ENCODE measurements at regions of chr11 and their contacts with region 1.

Region 1: GRCh38 chr11:1694064-1694845 is 2.7 kb upstream of the KRTAP5-6 start:
- DNase-seq: peak; percentile 92
- CTCF ChIP-seq: peak; percentile 93

Region 2: GRCh38 chr11:1335811-1336761 is 358.2 kb before region 1 on chr11:
- CTCF ChIA-PET with region 1: no interaction called
- POLR2A ChIA-PET with region 1: no interaction called
- DNase-seq: peak; percentile 57
- CTCF ChIP-seq: no peak

Region 3: DNA sequence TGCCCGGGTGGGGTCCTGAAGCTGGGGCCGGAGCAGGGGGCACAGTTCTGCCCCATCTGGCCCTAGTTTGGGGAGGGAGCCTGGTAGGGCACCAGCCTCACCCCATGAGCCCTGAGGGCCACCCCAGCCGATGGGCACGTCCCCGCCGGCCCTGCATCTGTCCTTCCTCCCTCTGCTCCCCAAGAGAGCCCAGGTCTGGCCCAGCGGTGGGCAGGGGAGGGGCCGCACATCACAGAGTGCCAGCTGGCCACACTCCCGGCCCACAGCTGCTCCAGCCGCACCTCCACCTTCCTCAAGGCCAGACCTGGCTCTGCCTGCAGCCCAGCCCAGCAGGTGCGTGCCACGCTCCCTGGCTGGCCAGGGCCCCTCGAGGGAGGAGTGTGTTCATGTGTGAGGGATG is 283.0 kb before region 1 on chr11:
- CTCF ChIA-PET with region 1: no interaction called
- POLR2A ChIA-PET with region 1: no interaction called
- DNase-seq: no peak
- CTCF ChIP-seq: no peak

Region 4: GRCh38 chr11:1674173-1675131 is 19.8 kb before region 1 on chr11:
- CTCF ChIA-PET with region 1: interaction called, 51 read pairs
- POLR2A ChIA-PET with region 1: no interaction called
- DNase-seq: peak; percentile 14
- CTCF ChIP-seq: no peak

Region 5: GRCh38 chr11:1749414-1750312 is 55.4 kb after region 1 on chr11:
- CTCF ChIA-PET with region 1: interaction called, 11 read pairs
- POLR2A ChIA-PET with region 1: no interaction called
- DNase-seq: no peak
- CTCF ChIP-seq: no peak

Region 6: GRCh38 chr11:1827095-1827813 is 133.0 kb after region 1 on chr11:
- CTCF ChIA-PET with region 1: interaction called, 352 read pairs
- POLR2A ChIA-PET with region 1: no interaction called
- DNase-seq: no peak
- CTCF ChIP-seq: no peak

Region 7: DNA sequence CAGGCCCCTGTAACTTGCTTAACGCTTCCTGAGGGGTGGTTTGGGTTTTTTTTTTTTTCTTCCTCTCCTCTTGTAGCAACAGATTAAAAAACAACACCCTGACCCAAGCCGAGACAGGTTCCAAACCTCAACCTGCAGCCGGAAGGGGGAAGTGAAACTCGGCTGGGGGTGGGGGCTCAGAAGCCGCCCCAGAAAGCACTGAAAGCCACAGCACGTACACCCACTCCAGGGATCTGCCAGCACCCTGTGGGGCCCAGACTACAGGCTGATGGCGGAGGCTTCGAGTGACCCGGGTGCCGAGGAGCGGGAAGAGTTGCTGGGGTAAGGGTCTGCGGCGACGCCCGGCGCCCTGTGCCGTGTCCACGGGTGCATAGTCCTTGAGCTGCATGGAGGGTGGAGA is 158.6 kb after region 1 on chr11 and contains the start of gene LSP1:
- CTCF ChIA-PET with region 1: interaction called, 16 read pairs
- POLR2A ChIA-PET with region 1: no interaction called
- DNase-seq: peak; percentile 93
- CTCF ChIP-seq: no peak

Region 8: GRCh38 chr11:2002807-2003206 is 308.6 kb after region 1 on chr11:
- CTCF ChIA-PET with region 1: interaction called, 83 read pairs
- POLR2A ChIA-PET with region 1: no interaction called
- DNase-seq: no peak
- CTCF ChIP-seq: no peak